ENCODE measurements at regions of chr12 and their contacts with region 1.

Region 1: DNA sequence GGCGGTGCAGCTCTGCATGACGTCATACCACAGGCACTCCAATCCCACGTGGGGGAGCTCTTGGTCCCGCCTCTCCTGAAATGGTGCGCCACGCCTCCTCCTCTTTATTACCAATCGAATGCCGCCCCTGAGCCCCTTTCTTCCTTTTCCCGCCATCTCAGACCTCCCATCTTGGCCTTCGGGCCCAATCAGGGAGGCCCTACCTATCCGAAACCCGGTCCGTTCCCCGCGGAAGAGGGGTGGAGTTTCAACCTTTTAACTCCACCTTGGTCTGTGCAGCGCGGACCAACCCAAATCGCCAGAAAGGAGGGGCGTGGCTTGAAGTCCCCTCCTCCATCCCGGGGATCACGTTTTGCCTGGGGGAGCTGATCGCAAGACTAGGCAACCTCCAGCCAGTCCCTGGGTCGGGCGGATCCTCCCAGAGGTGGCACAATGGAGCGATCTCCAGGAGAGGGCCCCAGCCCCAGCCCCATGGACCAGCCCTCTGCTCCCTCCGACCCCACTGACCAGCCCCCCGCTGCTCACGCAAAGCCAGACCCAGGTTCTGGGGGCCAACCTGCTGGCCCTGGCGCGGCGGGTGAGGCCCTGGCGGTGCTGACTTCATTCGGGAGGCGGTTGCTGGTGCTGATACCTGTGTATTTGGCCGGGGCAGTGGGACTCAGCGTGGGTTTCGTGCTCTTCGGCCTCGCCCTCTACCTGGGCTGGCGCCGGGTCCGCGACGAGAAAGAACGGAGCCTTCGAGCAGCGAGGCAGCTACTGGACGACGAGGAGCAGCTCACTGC is at the start of gene ESYT1:
- DNase-seq: peak; percentile 99 to 100
- H3K4me3 ChIP-seq: peak within 1 kb of the TSS; percentile 92
- CTCF ChIP-seq: no peak
- POLR2A ChIP-seq: no peak
- total RNA-seq, gene ESYT1: 51.2 to 84.1 (median 64.9) TPM

Region 2: DNA sequence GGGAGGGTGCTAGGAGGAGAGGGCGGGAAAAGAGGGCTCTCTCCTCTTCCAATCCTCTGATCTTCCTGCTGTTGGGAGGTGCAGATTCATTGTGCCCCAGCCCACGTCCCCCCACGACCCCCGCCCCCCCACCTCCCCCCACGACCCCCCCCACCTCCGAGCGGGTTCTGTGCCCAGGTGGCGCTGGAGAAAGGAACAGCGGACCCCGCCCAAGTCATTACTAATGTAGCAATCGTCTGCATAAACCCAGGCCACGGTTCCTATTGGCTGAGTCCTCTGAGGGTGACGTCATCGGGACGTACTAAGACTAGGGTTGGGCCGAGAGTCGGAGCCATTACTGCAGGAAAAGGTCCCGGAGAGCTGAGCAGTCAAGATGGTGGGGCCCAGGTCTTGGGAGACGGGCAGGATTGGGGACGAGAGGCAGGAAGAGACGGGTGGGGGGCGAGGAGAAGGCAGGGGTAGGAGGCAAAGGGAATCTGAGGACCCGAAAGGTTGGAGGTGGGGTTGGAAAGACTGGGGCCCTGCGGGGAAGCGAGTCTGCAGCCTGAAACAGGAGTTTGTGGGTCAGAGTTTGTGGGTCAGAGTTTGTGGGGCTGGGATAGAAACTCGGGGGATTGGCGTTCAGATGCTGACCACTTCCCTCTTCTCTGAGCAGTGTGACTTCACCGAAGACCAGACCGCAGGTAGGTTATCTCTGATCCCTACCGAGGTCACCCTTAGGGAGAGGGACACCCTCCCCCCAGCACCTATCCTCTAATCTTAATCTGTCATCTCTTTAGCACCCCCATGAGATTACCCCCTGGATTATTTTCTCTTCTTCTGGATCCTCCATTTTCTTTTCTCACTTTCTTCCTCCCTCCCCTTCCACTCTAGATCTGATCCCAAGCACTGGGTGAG is 30.2 kb after region 1 on chr12 and contains the start of gene MYL6:
- intact Hi-C with region 1: loop called (anchors 2 kb)
- DNase-seq: peak; percentile 99
- H3K4me3 ChIP-seq: peak within 1 kb of the TSS; percentile 80
- CTCF ChIP-seq: no peak
- POLR2A ChIP-seq: peak in 1 of 2 donors; percentile 98
- total RNA-seq, gene MYL6: 700 to 1,156 (median 824) TPM

Region 3: GRCh38 chr12:56178347-56178746 is 50.3 kb after region 1 on chr12:
- intact Hi-C with region 1: no loop called
- DNase-seq: no peak
- H3K4me3 ChIP-seq: no peak overlapping the region
- CTCF ChIP-seq: no peak
- POLR2A ChIP-seq: no peak

Region 4: GRCh38 chr12:56189176-56189917 is 61.3 kb after region 1 on chr12 and contains the start of gene SMARCC2:
- intact Hi-C with region 1: loop called (anchors 5 kb)
- DNase-seq: peak; percentile 85 to 97
- H3K4me3 ChIP-seq: peak within 1 kb of the TSS; percentile 85
- CTCF ChIP-seq: peak in 1 of 3 donors; percentile 57
- POLR2A ChIP-seq: no peak
- total RNA-seq, gene SMARCC2: 55.3 to 90.5 (median 63.5) TPM

Region 5: DNA sequence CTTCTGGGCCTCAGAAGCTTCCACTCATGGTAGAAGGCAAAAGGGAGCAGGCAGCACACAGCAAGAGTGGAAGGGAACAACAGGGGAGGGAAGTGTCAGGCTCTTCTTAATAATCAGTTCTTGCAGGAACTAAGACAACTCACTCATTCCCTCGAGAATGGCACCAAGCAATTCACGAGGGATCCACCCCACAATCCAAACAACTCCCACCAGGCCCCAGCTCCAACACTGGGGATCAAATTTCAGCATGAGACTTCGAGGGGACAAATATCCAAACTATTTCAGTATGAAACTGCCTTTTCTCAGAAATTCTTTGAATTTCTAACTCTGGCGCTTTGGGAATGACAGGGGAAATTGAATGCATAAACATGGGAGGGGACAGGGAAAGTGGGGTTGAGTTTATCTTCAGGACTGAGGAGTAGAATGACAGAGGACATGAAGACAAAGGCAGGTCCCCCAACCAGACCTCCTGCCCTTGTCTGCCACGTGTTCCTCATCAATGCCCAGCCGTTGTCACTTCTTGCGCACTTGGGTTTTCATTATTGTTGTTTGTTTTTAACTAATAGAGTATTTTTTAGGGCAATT is 259.2 kb after region 1 on chr12:
- intact Hi-C with region 1: no loop called
- DNase-seq: peak in 1 of 2 donors; percentile 28
- H3K4me3 ChIP-seq: no peak overlapping the region
- CTCF ChIP-seq: no peak
- POLR2A ChIP-seq: no peak

Region 6: GRCh38 chr12:56529290-56530055 is 401.4 kb after region 1 on chr12:
- intact Hi-C with region 1: no loop called
- DNase-seq: no peak
- H3K4me3 ChIP-seq: no peak overlapping the region
- CTCF ChIP-seq: no peak
- POLR2A ChIP-seq: no peak

Region 7: GRCh38 chr12:56766535-56766934 is 638.5 kb after region 1 on chr12:
- intact Hi-C with region 1: no loop called
- DNase-seq: no peak
- H3K4me3 ChIP-seq: no peak overlapping the region
- CTCF ChIP-seq: no peak
- POLR2A ChIP-seq: no peak